ENCODE measurements at regions of chr11 and their contacts with region 1.

Region 1: GRCh38 chr11:107898270-107898669 is 30.0 kb upstream of the RAB39A start:
- DNase-seq: peak; percentile 48
- CTCF ChIP-seq: peak; percentile 72

Region 2: GRCh38 chr11:107565219-107565937 is 332.9 kb before region 1 on chr11 and contains the start of gene ALKBH8:
- in situ Hi-C with region 1: loop called (anchors 25 kb)
- DNase-seq: peak; percentile 68
- CTCF ChIP-seq: no peak